ENCODE measurements at regions of chr17 and their contacts with region 1.

Region 1: GRCh38 chr17:47675380-47676198 is 18.4 kb upstream of the TBKBP1 start:
- DNase-seq: no peak
- ATAC-seq: no peak
- H3K4me3 ChIP-seq: no peak overlapping the region
- H3K27ac ChIP-seq: no peak overlapping the region
- H3K4me1 ChIP-seq: no peaks in the 10 kb centered on the region
- H3K27me3 ChIP-seq: no peaks in the 10 kb centered on the region
- CTCF ChIP-seq: no peak
- EP300 ChIP-seq: no peak
- POLR2A ChIP-seq: no peak
- RAD21 ChIP-seq: no peak

Region 2: GRCh38 chr17:47687748-47688147 is 12.2 kb after region 1 on chr17:
- CTCF ChIA-PET with region 1: no interaction called
- POLR2A ChIA-PET with region 1: interaction called, 30 read pairs
- in situ Hi-C with region 1: no loop called
- intact Hi-C with region 1: no loop called
- DNase-seq: peak in 2 of 4 experiments; percentile 37
- ATAC-seq: peak; percentile 54
- H3K4me3 ChIP-seq: no peak overlapping the region
- H3K27ac ChIP-seq: no peak overlapping the region; the same call in 2 of the 3 replicates
- H3K4me1 ChIP-seq: peaks cover 0 to under 1% of the 10 kb centered on the region in 2 experiments; a peak in 2 of 5 replicates
- H3K27me3 ChIP-seq: no peaks in the 10 kb centered on the region
- CTCF ChIP-seq: no peak
- EP300 ChIP-seq: no peak
- POLR2A ChIP-seq: no peak
- RAD21 ChIP-seq: no peak

Region 3: DNA sequence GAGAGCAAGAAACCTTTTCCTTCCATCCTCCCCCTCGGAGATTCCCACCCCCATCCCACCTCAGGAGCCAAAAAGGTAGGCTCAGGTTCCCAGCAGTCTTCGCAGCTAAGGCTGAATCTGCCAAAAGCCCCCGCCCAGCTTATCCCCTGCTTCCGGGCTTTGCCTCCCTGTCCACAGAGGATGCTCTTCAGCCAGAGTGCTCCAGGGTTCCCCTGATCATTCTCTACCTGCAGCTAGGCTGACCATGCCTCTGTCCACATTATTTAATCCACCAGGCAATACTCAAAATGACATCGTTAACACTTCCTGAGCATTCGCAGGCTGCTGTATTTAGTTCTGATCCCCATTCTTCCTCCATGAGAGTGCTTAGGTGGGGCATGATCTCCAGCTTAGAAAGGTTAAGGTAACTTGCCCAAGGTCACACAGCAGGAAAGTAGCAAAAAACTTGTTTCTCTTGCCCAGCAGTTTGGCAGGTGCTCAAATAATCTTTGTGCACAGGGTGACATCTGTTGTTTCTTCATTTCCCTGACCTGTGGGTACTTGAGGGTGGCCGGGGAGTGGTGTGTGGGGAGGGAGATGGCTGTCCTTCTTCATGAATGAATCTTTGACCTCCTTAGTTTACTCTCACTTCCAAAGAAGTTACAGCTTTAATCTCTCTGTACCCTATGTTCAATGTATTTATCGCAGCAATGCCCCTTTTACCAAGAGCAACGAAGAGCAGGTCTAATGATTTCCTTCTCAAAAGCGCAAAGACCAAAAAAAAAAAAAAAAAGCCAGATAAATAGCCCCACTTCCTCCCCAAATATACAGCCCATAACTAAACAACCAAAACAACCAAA is 17.5 kb after region 1 on chr17:
- CTCF ChIA-PET with region 1: no interaction called
- POLR2A ChIA-PET with region 1: interaction called, 30 read pairs
- in situ Hi-C with region 1: no loop called
- intact Hi-C with region 1: no loop called
- DNase-seq: peak in 1 of 4 experiments; percentile 37
- ATAC-seq: 0 out of 3 replicates have a peak, but pooled peaks have one; percentile 6
- H3K4me3 ChIP-seq: peak overlapping the region; percentile 77
- H3K27ac ChIP-seq: no peak overlapping the region; the same call in 2 of the 3 replicates
- H3K4me1 ChIP-seq: peaks cover 12 to 35% of the 10 kb centered on the region in 2 experiments; a peak in 4 of 5 replicates
- H3K27me3 ChIP-seq: no peaks in the 10 kb centered on the region
- CTCF ChIP-seq: no peak
- EP300 ChIP-seq: no peak
- POLR2A ChIP-seq: no peak
- RAD21 ChIP-seq: no peak